ENCODE measurements at regions of chr7 and their contacts with region 1.

Region 1: DNA sequence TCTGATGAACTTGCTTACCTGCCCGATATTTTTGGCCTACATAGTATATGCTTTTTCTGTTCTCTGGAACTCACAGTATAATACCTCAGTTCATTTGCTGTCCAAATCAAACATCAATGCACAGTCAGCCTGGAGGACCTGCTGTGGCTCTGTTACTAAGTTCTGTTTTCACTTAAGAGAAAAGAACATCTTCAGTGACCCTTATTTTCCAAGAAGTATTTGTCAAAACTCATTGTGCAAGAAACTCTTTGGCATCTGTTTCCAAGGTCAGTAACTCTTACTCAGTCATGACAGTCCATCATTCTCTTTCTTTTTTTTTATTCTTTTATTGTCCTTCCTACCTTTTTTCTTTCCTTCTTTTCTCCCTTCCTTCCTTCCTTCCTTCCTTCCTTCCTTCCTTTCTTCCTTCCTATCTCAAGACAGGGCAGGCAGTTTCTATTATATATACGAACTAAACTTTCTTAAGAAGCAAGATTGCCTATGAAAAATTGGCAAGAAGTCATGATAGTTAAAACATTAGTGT is 37.8 kb upstream of the SEM1 start:
- DNase-seq: peak; percentile 90
- H3K4me3 ChIP-seq: no peak overlapping the region
- H3K27ac ChIP-seq: peak overlapping the region; percentile 89
- H3K4me1 ChIP-seq: peaks cover 39% of the 10 kb centered on the region
- H3K27me3 ChIP-seq: no peaks in the 10 kb centered on the region
- CTCF ChIP-seq: no peak

Region 2: GRCh38 chr7:95899919-95900513 is 847.5 kb before region 1 on chr7:
- CTCF ChIA-PET with region 1: no interaction called
- POLR2A ChIA-PET with region 1: no interaction called
- intact Hi-C with region 1: loop called (anchors 5 kb)
- DNase-seq: no peak
- H3K4me3 ChIP-seq: no peak overlapping the region
- H3K27ac ChIP-seq: no peak overlapping the region
- H3K4me1 ChIP-seq: peaks cover 41% of the 10 kb centered on the region
- H3K27me3 ChIP-seq: no peaks in the 10 kb centered on the region
- CTCF ChIP-seq: no peak

Region 3: GRCh38 chr7:96414931-96415292 is 332.6 kb before region 1 on chr7:
- CTCF ChIA-PET with region 1: no interaction called
- POLR2A ChIA-PET with region 1: no interaction called
- intact Hi-C with region 1: loop called (anchors 5 kb)
- DNase-seq: peak; percentile 80
- H3K4me3 ChIP-seq: no peak overlapping the region
- H3K27ac ChIP-seq: peak overlapping the region; percentile 44
- H3K4me1 ChIP-seq: peaks cover 29% of the 10 kb centered on the region
- H3K27me3 ChIP-seq: no peaks in the 10 kb centered on the region
- CTCF ChIP-seq: peak; percentile 85

Region 4: DNA sequence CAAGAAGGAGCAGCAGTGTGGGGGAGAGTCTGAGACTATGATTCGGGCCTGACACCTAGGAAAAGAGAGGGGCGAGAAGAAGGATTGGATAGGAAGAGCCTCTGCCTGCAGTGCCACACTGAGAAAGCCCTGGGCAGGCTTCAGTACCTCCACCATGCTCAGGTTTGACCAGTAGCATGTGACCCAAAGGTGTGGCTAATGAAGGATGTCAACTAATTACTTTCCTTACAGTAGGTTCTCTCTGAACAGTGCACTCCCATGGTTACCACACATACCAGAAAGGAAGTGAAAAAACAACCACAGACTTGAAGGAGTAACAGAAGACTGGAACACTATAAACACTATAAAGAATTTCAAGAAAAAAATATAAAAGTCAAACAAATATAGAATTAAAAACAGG is 84.0 kb before region 1 on chr7:
- CTCF ChIA-PET with region 1: no interaction called
- POLR2A ChIA-PET with region 1: no interaction called
- intact Hi-C with region 1: no loop called
- DNase-seq: no peak
- H3K4me3 ChIP-seq: no peak overlapping the region
- H3K27ac ChIP-seq: no peak overlapping the region
- H3K4me1 ChIP-seq: no peaks in the 10 kb centered on the region
- H3K27me3 ChIP-seq: no peaks in the 10 kb centered on the region
- CTCF ChIP-seq: no peak

Region 5: GRCh38 chr7:97017192-97018125 is 270.0 kb after region 1 on chr7:
- CTCF ChIA-PET with region 1: interaction called, 10 read pairs
- POLR2A ChIA-PET with region 1: no interaction called
- intact Hi-C with region 1: loop called (anchors 2 kb)
- DNase-seq: peak; percentile 42
- H3K4me3 ChIP-seq: peak overlapping the region; percentile 76
- H3K27ac ChIP-seq: peak overlapping the region; percentile 89
- H3K4me1 ChIP-seq: peaks cover 49% of the 10 kb centered on the region
- H3K27me3 ChIP-seq: peaks cover 57% of the 10 kb centered on the region
- CTCF ChIP-seq: no peak

Region 6: GRCh38 chr7:97576043-97576442 is 828.6 kb after region 1 on chr7:
- CTCF ChIA-PET with region 1: no interaction called
- POLR2A ChIA-PET with region 1: no interaction called
- intact Hi-C with region 1: no loop called
- DNase-seq: no peak
- H3K4me3 ChIP-seq: no peak overlapping the region
- H3K27ac ChIP-seq: no peak overlapping the region
- H3K4me1 ChIP-seq: no peaks in the 10 kb centered on the region
- H3K27me3 ChIP-seq: no peaks in the 10 kb centered on the region
- CTCF ChIP-seq: no peak

Measured in A673 (cell line).